Heart left ventricle (tissue), 16 donors: ENCODE measurements at regions of chr1 and their contacts with region 1.

Region 1: DNA sequence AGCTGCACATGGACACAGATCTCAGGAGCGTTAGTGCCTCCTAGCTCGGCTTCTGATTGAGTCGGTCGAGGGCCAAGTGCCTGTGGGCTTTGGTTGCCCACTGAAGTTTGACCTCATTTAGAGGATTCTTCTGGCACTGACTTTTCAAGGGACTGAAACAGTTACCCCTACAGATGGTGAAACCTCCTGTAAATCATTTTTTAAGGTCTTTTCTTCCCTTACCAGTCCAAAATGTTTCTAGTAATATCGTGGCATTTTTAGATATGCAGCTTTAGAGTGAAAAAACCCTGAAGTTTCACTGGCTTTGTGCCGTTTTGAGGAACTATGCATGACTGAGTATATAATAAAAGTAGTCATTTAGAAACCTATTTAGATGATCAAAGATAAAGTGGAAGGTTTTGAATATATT is 34.7 kb upstream of the L1TD1 start:
- DNase-seq: no peak
- ATAC-seq: no peak
- H3K4me3 ChIP-seq: no peak overlapping the region
- H3K27ac ChIP-seq: no peak overlapping the region
- H3K4me1 ChIP-seq: no peaks in the 10 kb centered on the region
- H3K27me3 ChIP-seq: no peaks in the 10 kb centered on the region
- CTCF ChIP-seq: no peak
- POLR2A ChIP-seq: no peak

Region 2: GRCh38 chr1:62024690-62025089 is 135.3 kb before region 1 on chr1:
- intact Hi-C with region 1: no loop called
- DNase-seq: no peak
- ATAC-seq: peak in 2 of 4 donors; percentile 55 to 65
- H3K4me3 ChIP-seq: no peak overlapping the region
- H3K27ac ChIP-seq: peak overlapping the region in 1 of 12 donors; percentile 7
- H3K4me1 ChIP-seq: peaks cover 0 to 17% (median 0%) of the 10 kb centered on the region in 12 donors
- H3K27me3 ChIP-seq: no peaks in the 10 kb centered on the region
- CTCF ChIP-seq: no peak
- POLR2A ChIP-seq: no peak

Region 3: DNA sequence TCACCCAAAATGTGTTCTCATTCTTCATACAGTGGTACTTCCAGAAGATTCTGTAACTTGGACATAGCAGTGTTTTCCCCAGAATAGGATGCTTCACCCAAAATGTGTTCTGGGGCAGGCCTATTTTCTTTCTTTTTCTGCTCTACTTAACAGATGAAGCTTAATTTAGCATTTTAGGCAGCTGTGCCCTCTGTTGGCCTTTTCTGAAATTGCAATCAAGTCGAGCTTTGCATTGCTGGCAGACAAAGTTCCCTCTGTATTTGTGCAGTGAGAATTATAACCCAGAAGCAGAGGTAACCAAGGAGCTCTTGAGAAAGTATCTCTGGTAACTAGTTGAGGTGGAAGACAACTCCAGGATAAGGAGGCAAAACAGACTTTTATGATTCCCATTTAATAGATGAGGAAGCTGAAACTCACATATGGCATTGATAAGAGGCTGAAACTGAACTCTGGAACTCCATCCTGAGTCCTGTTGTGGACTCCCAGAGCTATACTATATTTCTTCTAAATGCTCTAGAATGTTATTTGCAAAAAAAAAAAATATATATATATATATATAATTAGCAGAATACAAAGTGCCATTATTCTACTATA is 15.6 kb before region 1 on chr1:
- intact Hi-C with region 1: no loop called
- DNase-seq: no peak
- ATAC-seq: no peak
- H3K4me3 ChIP-seq: no peak overlapping the region
- H3K27ac ChIP-seq: no peak overlapping the region
- H3K4me1 ChIP-seq: peaks cover 0 to 18% (median 0%) of the 10 kb centered on the region in 12 donors
- H3K27me3 ChIP-seq: no peaks in the 10 kb centered on the region
- CTCF ChIP-seq: peak; percentile 43 to 74 (median 65)
- POLR2A ChIP-seq: no peak

Region 4: DNA sequence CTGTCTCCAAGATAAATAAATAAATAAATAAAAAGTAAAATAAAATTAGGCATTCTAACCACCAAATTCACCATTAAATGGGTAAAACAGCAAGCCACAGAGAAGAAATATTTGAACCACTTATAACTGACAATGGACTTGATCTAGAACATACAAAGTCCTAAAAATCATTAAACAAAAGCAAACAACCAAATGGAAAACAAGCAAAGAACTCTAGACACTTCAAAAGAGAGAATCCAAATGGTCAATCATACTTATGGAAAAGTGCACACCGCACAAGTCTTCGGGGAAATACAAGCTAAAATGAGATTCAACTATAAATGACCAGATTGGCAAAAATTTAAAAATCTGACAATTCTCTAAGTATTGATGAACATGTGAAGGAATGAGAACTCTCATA is 363.9 kb after region 1 on chr1:
- intact Hi-C with region 1: loop called in 1 of 10 experiments (anchors 5 kb)
- DNase-seq: no peak
- ATAC-seq: no peak
- H3K4me3 ChIP-seq: no peak overlapping the region
- H3K27ac ChIP-seq: no peak overlapping the region
- H3K4me1 ChIP-seq: no peaks in the 10 kb centered on the region
- H3K27me3 ChIP-seq: no peaks in the 10 kb centered on the region
- CTCF ChIP-seq: no peak
- POLR2A ChIP-seq: no peak